ENCODE measurements at regions of chr13 and their contacts with region 1.

Region 1: GRCh38 chr13:108895220-108895704 is 265.9 kb downstream of the MYO16 start:
- DNase-seq: no peak
- ATAC-seq: no peak

Region 2: GRCh38 chr13:108060111-108060510 is 835.2 kb before region 1 on chr13:
- intact Hi-C with region 1: no loop called
- DNase-seq: no peak
- ATAC-seq: no peak

Region 3: DNA sequence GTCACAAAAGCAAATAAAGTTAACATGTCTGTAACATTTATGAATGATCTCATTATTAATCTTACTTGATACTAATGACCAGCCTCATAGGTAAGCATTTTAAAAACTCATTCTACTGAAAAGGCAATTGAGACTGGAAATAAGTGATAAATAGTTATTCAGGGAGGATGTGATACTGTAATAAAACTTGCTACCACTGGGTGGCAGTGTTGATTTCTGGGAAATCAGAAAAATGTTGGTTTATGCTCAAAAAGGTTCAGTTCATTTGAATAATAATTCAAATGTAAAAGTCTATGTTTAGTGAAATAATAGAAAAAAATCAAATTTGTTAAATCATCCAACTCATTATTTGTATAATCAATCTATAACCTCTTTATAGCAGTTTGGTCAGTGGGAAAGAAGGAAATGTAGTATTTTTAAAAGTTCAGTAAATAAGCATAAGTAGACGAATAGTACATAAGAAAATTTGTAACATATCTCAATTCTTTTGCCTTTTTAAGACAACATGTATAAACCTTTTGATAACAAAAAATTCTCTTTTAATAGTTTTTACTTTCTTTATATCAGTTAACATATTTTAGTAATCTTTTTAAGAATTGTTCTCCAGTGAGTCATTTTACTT is 667.5 kb before region 1 on chr13:
- intact Hi-C with region 1: loop called in 1 of 2 experiments (anchors 5 kb)
- DNase-seq: no peak
- ATAC-seq: no peak

Region 4: DNA sequence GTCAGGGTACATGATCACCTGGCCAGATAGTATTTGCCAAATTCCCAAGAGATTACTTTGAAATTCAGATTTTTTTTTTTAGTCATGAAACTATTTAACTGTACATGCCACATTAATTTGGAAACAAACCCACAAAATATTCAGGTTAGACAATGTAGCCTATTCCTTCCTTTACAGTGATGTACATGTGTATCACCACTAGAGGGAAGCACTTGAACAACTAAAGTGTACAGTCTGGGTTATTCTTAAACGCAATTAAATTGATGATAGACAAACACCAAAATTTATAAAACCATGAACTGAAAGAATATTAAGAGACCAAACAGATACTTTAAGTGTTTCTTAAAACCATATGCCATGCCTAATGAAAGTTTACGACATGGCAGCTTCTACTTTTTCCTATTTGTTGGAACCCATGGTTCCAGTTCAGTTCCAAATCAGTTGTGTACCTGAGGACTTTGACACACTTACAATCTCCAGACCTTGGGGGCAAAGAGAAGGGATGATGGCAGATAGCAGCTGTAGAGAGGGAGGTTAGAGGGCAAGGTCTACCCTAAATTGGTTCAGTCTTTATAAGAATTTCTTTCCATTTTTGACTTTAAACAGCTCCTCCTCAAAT is 572.9 kb before region 1 on chr13:
- intact Hi-C with region 1: loop called in 1 of 2 experiments (anchors 5 kb)
- DNase-seq: no peak
- ATAC-seq: peak; percentile 68 to 79

Region 5: GRCh38 chr13:108342369-108343289 is 552.6 kb before region 1 on chr13:
- intact Hi-C with region 1: loop called (anchors 5 to 10 kb)
- DNase-seq: no peak
- ATAC-seq: peak; percentile 34 to 57

Region 6: GRCh38 chr13:108609353-108609752 is 285.9 kb before region 1 on chr13:
- intact Hi-C with region 1: loop called (anchors 1 to 10 kb)
- DNase-seq: no peak
- ATAC-seq: peak in 1 of 2 donors; percentile 53

Region 7: DNA sequence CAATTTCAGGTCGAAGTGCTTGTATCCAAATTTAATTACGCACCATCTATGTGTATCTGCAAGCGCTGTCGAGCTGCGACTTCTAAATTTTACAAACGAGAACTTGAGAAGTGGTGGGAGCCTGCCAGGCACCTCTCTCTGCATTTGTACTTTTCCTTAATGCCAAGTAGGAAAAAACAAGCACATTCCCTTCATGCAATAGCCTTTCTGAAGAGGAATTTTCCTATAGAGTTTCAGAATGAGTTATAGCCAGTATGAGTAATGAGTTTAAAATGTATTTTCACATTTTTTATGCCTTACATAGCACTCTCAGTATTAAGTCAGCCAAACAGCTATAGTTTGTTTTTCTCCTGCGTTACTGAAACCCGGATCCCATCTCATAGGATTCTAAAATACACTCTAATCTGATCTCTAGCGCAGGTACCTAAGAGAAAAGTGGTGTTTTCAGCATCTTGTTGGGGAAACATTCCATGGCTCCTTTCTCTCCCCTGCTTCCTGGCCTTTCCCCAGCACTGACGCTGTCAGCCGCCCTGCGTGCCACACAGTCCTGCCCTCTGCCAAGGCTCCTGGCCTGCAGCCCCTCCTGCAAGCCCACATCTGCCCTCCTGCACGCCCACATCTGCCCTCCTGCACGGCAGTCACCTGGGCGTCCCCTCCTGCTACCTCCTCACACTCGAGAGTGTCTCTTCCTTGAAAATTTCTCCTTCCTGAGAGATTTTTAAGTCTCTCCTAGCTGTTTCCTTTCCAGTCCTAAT is 261.1 kb after region 1 on chr13:
- intact Hi-C with region 1: no loop called
- DNase-seq: no peak
- ATAC-seq: peak; percentile 46 to 72